IMR-90 (cell line): ENCODE measurements at regions of chr6 and their contacts with region 1.

Region 1: DNA sequence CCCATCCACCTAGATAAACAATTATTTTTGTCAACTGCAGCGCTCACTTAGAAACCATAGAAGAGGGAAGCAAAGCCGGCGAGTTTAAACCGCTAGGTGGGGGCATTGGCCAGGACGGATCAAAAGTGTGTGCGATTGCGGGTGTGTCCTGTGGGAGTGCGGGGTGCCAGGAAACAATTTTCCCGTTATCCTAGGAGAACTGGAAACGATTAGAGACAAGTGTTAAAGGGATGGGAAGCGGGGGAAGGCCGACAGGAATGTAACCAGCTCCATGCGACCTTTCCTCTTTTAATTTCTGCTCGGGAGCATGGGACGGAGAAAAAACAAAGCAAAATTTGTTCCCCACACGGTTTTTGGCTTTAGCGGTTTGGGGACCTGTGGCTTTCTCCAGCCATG is 2.8 kb upstream of the HTR1B start:
- DNase-seq: peak; percentile 74
- ATAC-seq: peak; percentile 81
- H3K4me3 ChIP-seq: peak overlapping the region; percentile 46
- H3K27ac ChIP-seq: no peak overlapping the region; the same call in 1 of the 2 replicates
- H3K4me1 ChIP-seq: no peaks in the 10 kb centered on the region; the same call in 1 of the 2 replicates
- H3K27me3 ChIP-seq: peaks cover 17% of the 10 kb centered on the region
- CTCF ChIP-seq: peak; percentile 72
- POLR2A ChIP-seq: no peak
- RAD21 ChIP-seq: peak; percentile 71

Region 2: DNA sequence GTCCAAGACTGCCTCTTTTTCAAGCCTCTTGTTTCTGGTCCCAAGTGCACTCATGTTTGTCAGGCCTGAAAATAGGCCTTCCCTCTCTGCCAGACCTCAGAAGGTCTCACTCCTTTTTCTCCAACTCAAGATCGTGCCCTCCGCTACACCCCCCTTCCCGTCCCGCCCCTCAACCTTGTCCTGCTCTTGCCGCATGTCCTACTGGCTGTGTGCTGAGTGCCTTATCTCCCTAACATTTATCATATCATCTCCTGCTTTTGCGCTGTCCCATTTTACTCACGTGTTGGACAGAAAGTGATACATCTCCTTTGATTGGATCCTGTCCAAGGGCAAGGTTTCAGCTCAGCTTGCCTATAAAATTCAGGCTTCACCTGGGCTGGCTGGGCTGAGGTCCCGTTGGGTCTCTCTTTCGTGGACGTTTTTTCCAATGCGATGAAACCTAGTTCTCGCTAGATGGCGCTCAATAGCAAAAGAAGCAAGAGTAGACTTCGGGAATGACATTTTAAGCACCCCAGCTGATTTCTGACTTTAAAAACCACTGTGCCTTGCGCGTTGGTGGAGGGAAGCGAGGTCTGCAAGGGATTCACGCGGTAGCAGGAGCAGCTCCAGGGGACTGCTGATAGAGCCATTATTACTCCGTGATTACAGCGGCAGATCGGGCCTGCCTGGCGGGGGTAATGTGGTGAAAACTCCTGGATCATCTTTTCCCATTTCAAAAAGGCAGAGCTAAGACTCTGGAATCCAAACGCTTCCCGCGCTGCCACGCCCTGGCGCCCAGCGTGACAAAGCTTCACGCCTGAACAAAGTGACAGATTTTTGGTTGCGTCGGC is 1531.2 kb before region 1 on chr6:
- CTCF ChIA-PET with region 1: interaction called, 3 read pairs
- POLR2A ChIA-PET with region 1: no interaction called
- dilution Hi-C with region 1: no loop called
- in situ Hi-C with region 1: loop called (anchors 10 kb)
- intact Hi-C with region 1: no loop called
- DNase-seq: peak; percentile 79
- ATAC-seq: peak; percentile 84
- H3K4me3 ChIP-seq: peak overlapping the region; percentile 42
- H3K27ac ChIP-seq: no peak overlapping the region
- H3K4me1 ChIP-seq: peaks cover 2% of the 10 kb centered on the region
- H3K27me3 ChIP-seq: peaks cover 11% of the 10 kb centered on the region; the same call in 1 of the 2 replicates
- CTCF ChIP-seq: peak; percentile 81
- POLR2A ChIP-seq: no peak
- RAD21 ChIP-seq: peak; percentile 75

Region 3: DNA sequence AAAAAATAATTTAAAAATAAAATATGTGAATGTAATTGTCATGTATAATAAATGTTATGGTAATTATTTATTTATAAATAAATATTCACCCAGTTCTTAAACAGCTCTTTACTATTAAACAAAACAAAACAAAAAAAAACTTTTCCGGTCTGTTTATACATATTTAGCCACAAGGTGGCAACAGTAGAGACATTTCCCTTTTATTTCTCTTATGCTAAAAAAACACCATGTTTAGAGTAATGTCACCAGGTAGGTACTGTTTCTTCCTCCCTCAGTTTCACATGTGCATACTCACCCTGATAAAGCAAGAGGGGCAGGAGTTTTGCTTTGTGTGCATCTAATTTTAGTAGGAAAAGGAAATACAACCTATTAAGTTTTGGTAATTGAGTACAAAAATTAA is 783.2 kb before region 1 on chr6:
- CTCF ChIA-PET with region 1: no interaction called
- POLR2A ChIA-PET with region 1: no interaction called
- dilution Hi-C with region 1: no loop called
- in situ Hi-C with region 1: loop called (anchors 5 kb)
- intact Hi-C with region 1: no loop called
- DNase-seq: peak; percentile 10
- ATAC-seq: no peak; the same call in 1 of the 2 replicates
- H3K4me3 ChIP-seq: no peak overlapping the region
- H3K27ac ChIP-seq: no peak overlapping the region
- H3K4me1 ChIP-seq: no peaks in the 10 kb centered on the region
- H3K27me3 ChIP-seq: no peaks in the 10 kb centered on the region
- CTCF ChIP-seq: peak; percentile 47
- POLR2A ChIP-seq: no peak
- RAD21 ChIP-seq: peak; percentile 20; the same call in 1 of the 2 replicates

Region 4: DNA sequence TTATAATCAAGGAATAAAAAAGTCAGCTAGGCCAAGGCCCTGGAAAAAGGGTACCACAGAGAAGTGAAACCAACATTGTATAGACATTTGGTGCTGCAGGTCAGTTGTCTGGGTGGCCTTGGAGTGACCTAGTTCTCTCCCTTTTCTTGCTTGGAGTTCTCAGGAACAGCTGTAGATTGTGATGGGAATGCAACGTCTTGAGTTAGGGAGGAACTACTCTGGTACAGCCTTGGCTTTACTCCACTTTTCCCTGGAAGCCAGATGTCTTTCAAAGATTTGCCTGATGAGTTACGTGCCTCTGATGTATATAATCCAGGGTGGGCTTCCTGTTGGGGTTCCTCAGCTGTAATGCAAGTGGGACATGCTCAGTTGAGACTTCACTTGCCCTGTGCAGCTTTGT is 697.5 kb before region 1 on chr6:
- CTCF ChIA-PET with region 1: no interaction called
- POLR2A ChIA-PET with region 1: no interaction called
- dilution Hi-C with region 1: no loop called
- in situ Hi-C with region 1: no loop called
- intact Hi-C with region 1: no loop called
- DNase-seq: no peak
- ATAC-seq: no peak
- H3K4me3 ChIP-seq: no peak overlapping the region
- H3K27ac ChIP-seq: no peak overlapping the region
- H3K4me1 ChIP-seq: no peaks in the 10 kb centered on the region
- H3K27me3 ChIP-seq: no peaks in the 10 kb centered on the region
- CTCF ChIP-seq: no peak
- POLR2A ChIP-seq: no peak
- RAD21 ChIP-seq: no peak

Region 5: DNA sequence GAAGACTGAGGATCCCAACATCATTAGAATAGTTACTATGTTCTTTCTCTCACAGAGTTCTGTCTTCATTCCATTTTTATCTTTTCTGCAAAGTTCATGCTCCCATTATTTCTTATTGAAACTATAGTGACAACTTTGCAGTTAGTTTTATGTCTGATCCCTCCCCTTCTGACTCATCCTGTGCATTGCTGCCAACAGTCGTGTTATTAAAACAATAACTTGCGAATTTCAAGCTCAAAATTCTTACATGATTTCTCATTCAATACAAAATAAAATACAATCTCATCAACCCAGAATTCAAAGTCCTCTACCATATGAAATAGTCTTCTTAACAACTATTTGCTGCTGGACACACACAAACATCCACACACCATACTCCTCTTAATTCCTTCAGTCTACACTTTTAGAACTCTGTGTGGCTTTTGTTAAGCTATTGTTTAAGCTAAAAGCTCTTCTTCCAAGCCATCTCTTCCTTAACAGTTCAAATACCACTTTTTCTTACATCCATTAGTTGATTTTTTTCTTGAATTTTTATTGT is 1139.9 kb after region 1 on chr6:
- CTCF ChIA-PET with region 1: no interaction called
- POLR2A ChIA-PET with region 1: no interaction called
- dilution Hi-C with region 1: no loop called
- in situ Hi-C with region 1: loop called (anchors 25 kb)
- intact Hi-C with region 1: loop called (anchors 5 kb)
- DNase-seq: peak; percentile 87
- ATAC-seq: peak; percentile 81
- H3K4me3 ChIP-seq: peak overlapping the region; percentile 41; the same call in 1 of the 2 replicates
- H3K27ac ChIP-seq: peak overlapping the region; percentile 55; the same call in 1 of the 2 replicates
- H3K4me1 ChIP-seq: peaks cover 9% of the 10 kb centered on the region
- H3K27me3 ChIP-seq: no peaks in the 10 kb centered on the region
- CTCF ChIP-seq: no peak
- POLR2A ChIP-seq: no peak
- RAD21 ChIP-seq: no peak

Region 6: DNA sequence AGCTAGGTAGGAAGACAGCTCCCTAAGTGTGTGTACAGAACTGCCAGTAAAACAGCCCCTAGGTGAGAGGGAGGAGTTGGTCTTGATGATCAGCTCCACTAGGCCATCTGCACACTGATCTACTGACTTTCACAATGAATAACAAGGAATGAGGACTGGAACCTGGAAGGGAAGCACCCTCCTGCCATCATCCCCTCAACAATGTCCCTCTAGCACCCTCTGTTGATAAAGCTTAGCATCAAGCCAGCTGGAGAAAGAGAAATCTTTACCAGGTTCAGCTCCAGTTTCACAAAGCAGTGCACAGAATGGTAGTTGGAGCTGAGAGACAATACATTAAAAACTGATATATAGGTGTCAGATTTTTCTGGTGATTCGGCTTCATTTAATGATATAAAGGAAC is 1344.1 kb after region 1 on chr6:
- CTCF ChIA-PET with region 1: interaction called, 11 read pairs
- POLR2A ChIA-PET with region 1: no interaction called
- dilution Hi-C with region 1: no loop called
- in situ Hi-C with region 1: no loop called
- intact Hi-C with region 1: loop called (anchors 1 kb)
- DNase-seq: peak; percentile 50
- ATAC-seq: peak; percentile 89
- H3K4me3 ChIP-seq: no peak overlapping the region
- H3K27ac ChIP-seq: no peak overlapping the region
- H3K4me1 ChIP-seq: no peaks in the 10 kb centered on the region
- H3K27me3 ChIP-seq: no peaks in the 10 kb centered on the region
- CTCF ChIP-seq: peak; percentile 77
- POLR2A ChIP-seq: no peak
- RAD21 ChIP-seq: peak; percentile 87